ENCODE measurements at regions of chr2 and their contacts with region 1.

Region 1: GRCh38 chr2:95062242-95063085 is 37.0 kb downstream of the MAL start:
- DNase-seq: no peak
- ATAC-seq: peak; percentile 59
- H3K4me3 ChIP-seq: no peak overlapping the region
- H3K27ac ChIP-seq: peak overlapping the region; percentile 84
- H3K4me1 ChIP-seq: peaks cover 27% of the 10 kb centered on the region
- H3K27me3 ChIP-seq: no peaks in the 10 kb centered on the region
- CTCF ChIP-seq: no peak
- EP300 ChIP-seq: 0 out of 4 replicates have a peak, but pooled peaks of 1 of the 2 experiments have one; percentile 9
- POLR2A ChIP-seq: no peak
- RAD21 ChIP-seq: no peak

Region 2: GRCh38 chr2:95043300-95044093 is 19.0 kb before region 1 on chr2:
- CTCF ChIA-PET with region 1: interaction called, 10 read pairs
- POLR2A ChIA-PET with region 1: interaction called, 15 read pairs
- RAD21 ChIA-PET with region 1: interaction called, 40 read pairs
- SMC1A ChIA-PET with region 1: interaction called, 44 read pairs
- in situ Hi-C with region 1: no loop called
- intact Hi-C with region 1: no loop called
- DNase-seq: peak; percentile 75
- ATAC-seq: peak; percentile 67
- H3K4me3 ChIP-seq: no peak overlapping the region
- H3K27ac ChIP-seq: peak overlapping the region; percentile 51
- H3K4me1 ChIP-seq: peaks cover 48% of the 10 kb centered on the region
- H3K27me3 ChIP-seq: no peaks in the 10 kb centered on the region
- CTCF ChIP-seq: no peak; a peak in 1 of 6 replicates
- EP300 ChIP-seq: no peak
- POLR2A ChIP-seq: no peak
- RAD21 ChIP-seq: no peak

Region 3: GRCh38 chr2:95115418-95115817 is 53.0 kb after region 1 on chr2:
- CTCF ChIA-PET with region 1: interaction called, 3 read pairs
- POLR2A ChIA-PET with region 1: no interaction called
- RAD21 ChIA-PET with region 1: no interaction called
- SMC1A ChIA-PET with region 1: interaction called, 10 read pairs
- in situ Hi-C with region 1: no loop called
- intact Hi-C with region 1: no loop called
- DNase-seq: peak; percentile 25
- ATAC-seq: peak; percentile 95
- H3K4me3 ChIP-seq: no peak overlapping the region
- H3K27ac ChIP-seq: no peak overlapping the region
- H3K4me1 ChIP-seq: peaks cover 15% of the 10 kb centered on the region
- H3K27me3 ChIP-seq: no peaks in the 10 kb centered on the region
- CTCF ChIP-seq: peak; percentile 77 to 90 (median 83)
- EP300 ChIP-seq: no peak
- POLR2A ChIP-seq: no peak
- RAD21 ChIP-seq: peak; percentile 82

Measured in GM12878 (cell line).